ENCODE measurements at regions of chrX and their contacts with region 1.

Region 1: GRCh38 chrX:64975989-64976672 is at the start of gene ZC4H2:
- DNase-seq: peak; percentile 50
- H3K4me3 Mint-ChIP-seq: peak within 1 kb of the TSS; percentile 92
- H3K27ac Mint-ChIP-seq: peak within 1 kb of the TSS; percentile 80
- H3K4me1 Mint-ChIP-seq: peaks cover 19% of the 10 kb centered on the region
- H3K27me3 Mint-ChIP-seq: peaks cover 5% of the 10 kb centered on the region
- total RNA-seq, gene ZC4H2: 11.6 and 12.1 TPM in 2 replicates

Region 2: DNA sequence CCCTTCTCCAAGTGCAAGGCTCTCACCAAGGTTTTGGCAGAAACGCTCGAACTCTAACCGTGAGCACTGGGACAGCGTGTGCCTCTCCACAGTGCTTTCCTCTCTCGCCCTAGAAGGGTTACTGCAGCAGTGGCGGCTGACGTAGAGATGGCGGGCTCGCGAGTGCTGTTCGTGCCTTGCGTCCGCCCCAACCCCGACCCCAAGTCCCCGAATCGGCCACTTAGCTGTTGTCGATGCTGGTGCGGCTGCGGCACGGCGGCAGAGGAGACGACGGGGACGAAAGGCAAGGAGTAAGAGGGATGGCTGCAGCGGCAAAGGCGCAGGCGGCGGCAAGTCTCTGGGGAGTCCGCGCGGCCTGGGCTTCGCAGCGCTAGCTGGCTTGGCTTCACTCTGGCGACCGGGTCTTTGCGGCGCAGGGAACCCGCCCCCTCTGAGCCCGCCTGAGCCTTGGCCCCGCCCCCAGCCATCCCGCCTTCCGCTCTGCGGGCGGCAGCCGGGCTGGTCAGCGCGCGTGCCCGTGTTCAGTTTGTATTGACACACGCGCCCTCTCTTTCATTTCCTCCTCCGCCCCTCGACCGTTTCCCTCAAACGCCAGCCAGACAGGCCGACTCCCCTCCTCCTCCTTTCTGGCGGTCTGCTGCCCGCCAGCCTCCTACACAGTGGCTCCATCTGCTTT is 1625.1 kb before region 1 on chrX and contains the start of gene SPIN4:
- intact Hi-C with region 1: loop called (anchors 10 kb)
- DNase-seq: peak; percentile 54
- H3K4me3 Mint-ChIP-seq: peak within 1 kb of the TSS; percentile 93
- H3K27ac Mint-ChIP-seq: peak within 1 kb of the TSS; percentile 81
- H3K4me1 Mint-ChIP-seq: peaks cover 27% of the 10 kb centered on the region
- H3K27me3 Mint-ChIP-seq: peaks cover 2% of the 10 kb centered on the region
- total RNA-seq, gene SPIN4: 4.4 and 4.5 TPM in 2 replicates

Region 3: GRCh38 chrX:63560601-63561218 is 1415.4 kb before region 1 on chrX:
- intact Hi-C with region 1: loop called (anchors 5 kb)
- DNase-seq: peak; percentile 31
- H3K4me3 Mint-ChIP-seq: peak overlapping the region; percentile 97
- H3K27ac Mint-ChIP-seq: peak overlapping the region; percentile 73
- H3K4me1 Mint-ChIP-seq: peaks cover 9% of the 10 kb centered on the region
- H3K27me3 Mint-ChIP-seq: no peaks in the 10 kb centered on the region

Region 4: GRCh38 chrX:64394874-64395567 is 581.1 kb before region 1 on chrX and contains the start of gene MTMR8:
- intact Hi-C with region 1: loop called (anchors 1 kb)
- DNase-seq: peak; percentile 65
- H3K4me3 Mint-ChIP-seq: peak within 1 kb of the TSS; percentile 87
- H3K27ac Mint-ChIP-seq: peak within 1 kb of the TSS; percentile 54
- H3K4me1 Mint-ChIP-seq: peaks cover 17% of the 10 kb centered on the region
- H3K27me3 Mint-ChIP-seq: no peaks in the 10 kb centered on the region
- total RNA-seq, gene MTMR8: 4.1 and 7.1 TPM in 2 replicates

Region 5: DNA sequence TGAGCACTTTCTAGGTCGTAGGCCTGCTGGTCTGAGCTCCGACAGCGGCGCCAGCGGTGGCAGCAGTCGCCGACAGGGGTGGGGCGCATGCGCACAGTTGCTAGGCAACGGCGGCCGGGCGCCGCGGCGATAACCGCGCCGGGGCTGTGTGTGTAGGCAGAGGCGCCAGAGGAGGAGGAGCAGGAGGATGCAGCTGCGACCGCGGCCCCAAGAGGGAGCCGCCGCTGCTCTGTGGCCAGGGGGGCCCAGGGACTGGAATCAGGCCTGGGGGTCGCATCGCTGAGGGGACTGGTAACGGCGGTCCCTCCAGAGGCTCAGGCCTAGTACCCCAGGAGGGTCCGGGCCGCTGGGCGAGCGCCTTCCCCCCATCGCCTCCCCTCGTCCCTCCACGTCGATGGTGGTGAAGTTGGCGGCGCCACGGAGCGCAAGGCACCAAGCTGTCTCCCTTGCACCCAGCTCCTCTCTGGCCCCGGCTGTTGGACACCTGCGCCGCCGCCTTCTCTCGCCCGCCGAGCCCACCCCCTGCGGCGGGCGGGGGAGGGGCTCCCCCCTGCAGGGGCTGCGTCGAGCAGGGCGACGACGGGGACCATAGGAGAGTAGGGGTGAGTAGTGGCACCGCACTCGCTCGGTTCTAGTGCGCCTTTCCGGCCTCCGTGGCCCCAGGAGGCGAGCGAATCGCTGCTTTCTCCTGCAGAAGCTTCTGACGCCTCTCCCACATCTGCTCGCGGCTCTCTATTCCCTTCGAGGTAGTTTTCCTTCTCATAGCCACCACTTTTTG is 58.7 kb after region 1 on chrX:
- intact Hi-C with region 1: loop called (anchors 1 kb)
- DNase-seq: peak; percentile 76
- H3K4me3 Mint-ChIP-seq: peak within 1 kb of the TSS; percentile 91
- H3K27ac Mint-ChIP-seq: peak within 1 kb of the TSS; percentile 92
- H3K4me1 Mint-ChIP-seq: peaks cover 20% of the 10 kb centered on the region
- H3K27me3 Mint-ChIP-seq: no peaks in the 10 kb centered on the region

Region 6: DNA sequence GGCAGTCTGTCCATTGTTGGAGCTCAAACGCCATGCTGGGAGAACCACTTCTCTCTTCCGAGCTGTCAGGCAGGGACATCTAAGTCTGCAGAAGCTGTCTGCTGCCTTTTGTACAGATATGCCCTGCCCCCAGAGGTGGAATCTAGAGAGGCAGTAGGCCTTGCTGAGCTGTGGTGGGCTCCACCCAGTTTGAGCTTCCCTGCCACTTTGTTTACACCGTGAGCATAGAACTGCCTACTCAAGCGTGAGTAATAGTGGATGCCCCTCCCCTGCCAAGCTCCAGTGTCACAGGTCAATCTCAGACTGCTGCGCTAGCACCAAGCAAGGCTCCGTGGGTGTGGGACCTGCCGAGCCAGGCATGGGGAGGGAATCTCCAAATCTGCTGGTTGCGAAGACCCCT is 918.0 kb after region 1 on chrX:
- intact Hi-C with region 1: no loop called
- DNase-seq: no peak
- H3K4me3 Mint-ChIP-seq: no peak overlapping the region
- H3K27ac Mint-ChIP-seq: no peak overlapping the region
- H3K4me1 Mint-ChIP-seq: peaks cover 28% of the 10 kb centered on the region
- H3K27me3 Mint-ChIP-seq: peaks cover 1% of the 10 kb centered on the region

Region 7: GRCh38 chrX:65971151-65971550 is 995.0 kb after region 1 on chrX:
- intact Hi-C with region 1: no loop called
- DNase-seq: no peak
- H3K4me3 Mint-ChIP-seq: no peak overlapping the region
- H3K27ac Mint-ChIP-seq: no peak overlapping the region
- H3K4me1 Mint-ChIP-seq: no peaks in the 10 kb centered on the region
- H3K27me3 Mint-ChIP-seq: no peaks in the 10 kb centered on the region